Stomach (tissue), 19 donors: ENCODE measurements at regions of chr18 and their contacts with region 1.

Region 1: GRCh38 chr18:32549248-32550110 is 78.8 kb upstream of the GAREM1 start:
- DNase-seq: peak; percentile 71 to 82
- H3K4me3 ChIP-seq: no peak overlapping the region
- H3K27ac ChIP-seq: no peak overlapping the region
- H3K4me1 ChIP-seq: peaks cover 0 to 12% (median 5%) of the 10 kb centered on the region in 4 donors
- H3K27me3 ChIP-seq: no peaks in the 10 kb centered on the region
- CTCF ChIP-seq: peak in 5 of 7 experiments; percentile 31 to 78 (median 66)
- EP300 ChIP-seq: no peak
- POLR2A ChIP-seq: no peak

Region 2: GRCh38 chr18:32158108-32158624 is 391.3 kb before region 1 on chr18:
- intact Hi-C with region 1: loop called (anchors 5 kb)
- DNase-seq: peak; percentile 83 to 95
- H3K4me3 ChIP-seq: peak overlapping the region; percentile 31 to 37 (median 33)
- H3K27ac ChIP-seq: no peak overlapping the region
- H3K4me1 ChIP-seq: peaks cover 0 to 11% (median 7%) of the 10 kb centered on the region in 4 donors
- H3K27me3 ChIP-seq: no peaks in the 10 kb centered on the region
- CTCF ChIP-seq: peak in 5 of 7 experiments; percentile 73 to 93 (median 88)
- EP300 ChIP-seq: no peak
- POLR2A ChIP-seq: no peak

Region 3: GRCh38 chr18:32271672-32272208 is 277.7 kb before region 1 on chr18:
- intact Hi-C with region 1: loop called (anchors 5 kb)
- DNase-seq: peak in 1 of 2 donors; percentile 72
- H3K4me3 ChIP-seq: no peak overlapping the region
- H3K27ac ChIP-seq: peak overlapping the region in 2 of 5 donors; percentile 4 to 7
- H3K4me1 ChIP-seq: peaks cover 0 to 24% (median 10%) of the 10 kb centered on the region in 4 donors
- H3K27me3 ChIP-seq: no peaks in the 10 kb centered on the region
- CTCF ChIP-seq: peak in 5 of 7 experiments; percentile 29 to 73 (median 52)
- EP300 ChIP-seq: no peak
- POLR2A ChIP-seq: no peak

Region 4: DNA sequence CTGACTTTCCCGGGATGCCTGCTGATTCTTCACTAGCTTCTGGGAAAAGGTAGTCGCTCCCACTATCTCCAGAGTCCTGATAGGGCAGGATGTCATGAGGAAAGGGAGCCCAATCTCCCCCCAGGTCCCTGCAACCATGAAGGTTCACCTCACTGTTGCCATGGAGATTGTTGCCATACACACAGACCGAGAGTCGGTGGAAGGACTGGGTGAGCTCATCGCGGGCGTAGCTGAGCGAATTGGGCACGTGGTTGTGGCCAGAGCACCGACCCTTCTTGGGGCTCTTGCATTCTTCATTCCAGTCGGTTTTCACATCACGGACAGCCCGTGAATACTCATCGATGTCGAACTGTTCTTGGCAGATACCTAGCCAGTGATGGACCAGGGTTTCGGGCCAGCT is 262.2 kb before region 1 on chr18:
- intact Hi-C with region 1: no loop called
- DNase-seq: no peak
- H3K4me3 ChIP-seq: no peak overlapping the region
- H3K27ac ChIP-seq: no peak overlapping the region
- H3K4me1 ChIP-seq: peaks cover 0 to 9% (median 2%) of the 10 kb centered on the region in 4 donors
- H3K27me3 ChIP-seq: no peaks in the 10 kb centered on the region
- CTCF ChIP-seq: no peak
- EP300 ChIP-seq: no peak
- POLR2A ChIP-seq: no peak